ENCODE measurements at regions of chr6 and their contacts with region 1.

Region 1: DNA sequence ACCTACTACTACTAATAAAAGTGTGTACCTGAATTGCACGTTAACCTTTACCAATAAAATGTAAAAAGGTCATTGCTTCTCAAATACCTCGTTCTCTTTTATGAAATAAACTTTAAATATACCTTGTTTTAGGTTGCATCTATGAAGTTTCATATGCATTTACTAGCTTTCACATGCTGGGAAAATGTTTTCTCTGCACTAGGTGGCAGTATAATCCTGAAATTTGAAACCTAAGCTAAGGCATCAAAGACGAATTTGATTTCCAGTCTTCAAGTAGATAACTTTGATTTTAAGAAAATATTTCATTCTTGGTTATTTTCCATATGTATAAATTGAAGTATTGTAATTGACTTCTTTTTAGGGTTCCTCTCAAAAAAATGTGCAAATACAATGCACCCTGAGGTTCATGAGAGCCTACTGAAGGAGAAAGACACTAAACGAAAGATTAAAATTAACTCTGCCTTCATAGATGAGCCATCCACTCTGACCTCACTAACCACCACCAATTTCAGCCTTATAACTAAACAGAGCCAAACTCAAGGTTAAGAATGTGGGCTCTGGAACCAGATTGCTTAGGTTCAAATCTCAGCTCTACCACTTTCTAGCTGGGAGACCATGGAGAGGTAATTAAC is 7.3 kb upstream of the COL9A1 start:
- DNase-seq: peak in 1 of 4 donors; percentile 27
- ATAC-seq: no peak
- H3K4me3 ChIP-seq: no peak overlapping the region
- H3K27ac ChIP-seq: no peak overlapping the region
- H3K4me1 ChIP-seq: no peaks in the 10 kb centered on the region
- H3K27me3 ChIP-seq: no peaks in the 10 kb centered on the region
- CTCF ChIP-seq: peak; percentile 22 to 77 (median 63)
- POLR2A ChIP-seq: no peak

Region 2: GRCh38 chr6:70183538-70183937 is 126.6 kb before region 1 on chr6:
- intact Hi-C with region 1: no loop called
- DNase-seq: no peak
- ATAC-seq: no peak
- H3K4me3 ChIP-seq: no peak overlapping the region
- H3K27ac ChIP-seq: no peak overlapping the region
- H3K4me1 ChIP-seq: no peaks in the 10 kb centered on the region
- H3K27me3 ChIP-seq: no peaks in the 10 kb centered on the region
- CTCF ChIP-seq: no peak
- POLR2A ChIP-seq: no peak

Region 3: GRCh38 chr6:70369332-70369950 is 59.3 kb after region 1 on chr6:
- intact Hi-C with region 1: loop called (anchors 10 kb)
- DNase-seq: peak; percentile 63 to 74 (median 68)
- ATAC-seq: peak; percentile 82
- H3K4me3 ChIP-seq: no peak overlapping the region
- H3K27ac ChIP-seq: no peak overlapping the region
- H3K4me1 ChIP-seq: peaks cover 5% of the 10 kb centered on the region
- H3K27me3 ChIP-seq: no peaks in the 10 kb centered on the region
- CTCF ChIP-seq: peak; percentile 73 to 91 (median 87)
- POLR2A ChIP-seq: no peak

Region 4: GRCh38 chr6:70884074-70884983 is 574.1 kb after region 1 on chr6:
- intact Hi-C with region 1: loop called (anchors 10 kb)
- DNase-seq: peak; percentile 59 to 65 (median 63)
- ATAC-seq: peak; percentile 82
- H3K4me3 ChIP-seq: no peak overlapping the region
- H3K27ac ChIP-seq: no peak overlapping the region
- H3K4me1 ChIP-seq: no peaks in the 10 kb centered on the region
- H3K27me3 ChIP-seq: no peaks in the 10 kb centered on the region
- CTCF ChIP-seq: peak; percentile 80 to 95 (median 91)
- POLR2A ChIP-seq: no peak